Tibial artery (tissue), 4 donors: ENCODE measurements at regions of chr5 and their contacts with region 1.

Region 1: GRCh38 chr5:115586601-115587048 is 15.7 kb downstream of the TICAM2 start:
- DNase-seq: no peak
- H3K4me3 ChIP-seq: no peak overlapping the region
- H3K27ac ChIP-seq: no peak overlapping the region
- H3K4me1 ChIP-seq: no peaks in the 10 kb centered on the region
- H3K27me3 ChIP-seq: no peaks in the 10 kb centered on the region
- CTCF ChIP-seq: peak; percentile 54 to 57

Region 2: DNA sequence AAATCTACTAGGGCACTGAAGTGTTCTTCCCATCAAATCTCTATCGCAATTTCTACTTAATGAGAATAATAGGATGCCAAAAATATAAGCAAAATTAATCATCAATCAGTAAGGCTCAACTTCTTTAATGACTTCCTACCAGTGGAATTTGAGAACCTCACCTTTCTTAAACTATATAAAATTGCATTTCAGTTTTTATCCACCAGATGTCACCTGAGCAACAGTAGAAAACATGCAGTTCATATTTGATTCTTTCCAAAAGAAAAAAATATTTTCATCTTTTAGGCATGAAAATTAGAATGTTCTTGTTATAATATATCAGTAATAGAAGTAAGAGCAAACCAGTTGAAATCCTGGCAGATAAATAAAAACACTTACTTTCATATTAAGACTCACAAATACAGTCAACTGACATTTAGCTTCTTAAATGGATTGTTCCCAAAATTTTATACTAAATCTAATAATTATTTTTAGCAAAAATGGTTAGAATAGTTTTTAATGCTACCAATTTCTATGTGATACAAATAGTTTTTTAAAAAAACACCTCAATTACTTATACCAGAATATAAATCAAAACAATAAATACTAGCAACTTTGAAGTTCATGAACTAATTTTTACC is 276.8 kb before region 1 on chr5:
- intact Hi-C with region 1: loop called (anchors 5 kb)
- DNase-seq: no peak
- H3K4me3 ChIP-seq: no peak overlapping the region
- H3K27ac ChIP-seq: no peak overlapping the region
- H3K4me1 ChIP-seq: no peaks in the 10 kb centered on the region
- H3K27me3 ChIP-seq: peaks cover 0 to 2% of the 10 kb centered on the region in 2 donors
- CTCF ChIP-seq: peak; percentile 74 to 76

Region 3: DNA sequence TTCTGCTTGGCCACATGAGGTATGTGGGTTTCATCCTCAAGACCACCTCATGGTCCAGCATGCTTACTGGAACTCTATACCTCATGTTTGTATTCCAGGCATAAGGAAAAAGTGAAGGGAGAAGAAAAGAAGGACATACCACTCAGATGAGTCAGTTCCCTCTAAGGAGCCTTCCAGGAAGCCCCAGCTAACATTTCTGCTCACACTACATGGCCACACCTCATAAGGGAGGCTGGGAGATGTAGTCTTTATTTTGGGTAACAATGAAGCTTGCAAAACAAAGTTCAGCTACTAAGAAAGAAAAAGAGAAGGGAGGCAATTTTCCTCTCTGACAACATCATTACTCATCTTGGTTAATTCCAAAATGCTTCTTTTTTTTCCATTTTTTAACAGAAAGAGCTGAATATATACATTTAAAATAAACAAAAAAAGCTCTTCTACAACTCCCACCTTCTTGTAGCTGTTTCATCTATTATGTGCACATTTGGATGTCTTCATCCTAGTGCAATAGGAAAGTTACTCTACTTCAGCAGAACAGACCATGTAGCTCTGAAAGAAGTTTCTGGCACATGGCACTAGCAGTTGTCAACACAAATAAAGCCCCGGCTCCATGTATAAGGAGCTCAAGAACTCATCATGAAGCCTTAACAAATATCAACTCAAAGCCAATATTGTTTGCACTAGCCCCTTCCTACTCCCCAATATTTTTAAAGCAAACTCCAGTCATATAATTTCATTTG is 166.6 kb before region 1 on chr5:
- intact Hi-C with region 1: no loop called
- DNase-seq: no peak
- H3K4me3 ChIP-seq: no peak overlapping the region
- H3K27ac ChIP-seq: no peak overlapping the region
- H3K4me1 ChIP-seq: peaks cover 0 to 39% (median 19%) of the 10 kb centered on the region in 4 donors
- H3K27me3 ChIP-seq: no peaks in the 10 kb centered on the region
- CTCF ChIP-seq: no peak

Region 4: DNA sequence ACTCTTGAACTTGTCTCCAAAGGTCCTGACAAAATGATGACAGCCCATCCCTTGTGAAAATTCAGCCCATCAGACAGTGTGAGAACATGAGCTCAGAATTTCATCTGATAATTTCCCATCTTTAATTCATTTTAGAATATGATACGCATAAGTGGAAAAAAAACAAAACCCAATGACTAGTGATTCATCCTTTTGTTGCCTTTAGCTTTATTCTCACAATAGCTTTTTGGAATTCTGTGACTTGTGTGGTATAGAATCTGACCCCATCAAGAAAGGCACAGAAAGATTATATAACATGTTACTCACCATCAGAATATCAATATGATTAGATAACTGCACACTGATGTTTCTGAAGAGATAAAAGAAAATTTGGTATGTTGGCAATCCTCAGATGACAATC is 55.3 kb after region 1 on chr5:
- intact Hi-C with region 1: no loop called
- DNase-seq: no peak
- H3K4me3 ChIP-seq: no peak overlapping the region
- H3K27ac ChIP-seq: no peak overlapping the region
- H3K4me1 ChIP-seq: no peaks in the 10 kb centered on the region
- H3K27me3 ChIP-seq: no peaks in the 10 kb centered on the region
- CTCF ChIP-seq: no peak

Region 5: DNA sequence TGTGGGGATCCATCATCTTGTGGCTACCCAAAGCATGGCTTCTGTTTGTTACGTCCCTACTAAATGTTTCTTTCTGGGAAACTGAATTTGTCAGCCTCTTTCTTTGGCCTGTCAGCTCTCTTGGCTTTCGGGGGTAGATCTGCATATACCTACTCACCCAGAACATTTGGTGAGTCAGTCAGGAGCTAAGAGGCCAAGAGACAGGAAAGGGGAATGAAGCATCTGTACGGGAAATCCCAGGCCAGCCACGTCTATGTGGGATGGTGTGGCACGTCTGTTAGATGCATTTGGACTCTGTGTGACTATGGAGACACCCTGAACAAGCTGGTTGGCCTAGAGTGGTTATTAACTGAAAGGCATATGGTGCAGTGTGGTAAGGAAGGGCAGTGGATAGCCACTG is 171.7 kb after region 1 on chr5:
- intact Hi-C with region 1: no loop called
- DNase-seq: no peak
- H3K4me3 ChIP-seq: no peak overlapping the region
- H3K27ac ChIP-seq: no peak overlapping the region
- H3K4me1 ChIP-seq: no peaks in the 10 kb centered on the region
- H3K27me3 ChIP-seq: no peaks in the 10 kb centered on the region
- CTCF ChIP-seq: no peak